IMR-90 (cell line): ENCODE measurements at regions of chr16 and their contacts with region 1.

Region 1: DNA sequence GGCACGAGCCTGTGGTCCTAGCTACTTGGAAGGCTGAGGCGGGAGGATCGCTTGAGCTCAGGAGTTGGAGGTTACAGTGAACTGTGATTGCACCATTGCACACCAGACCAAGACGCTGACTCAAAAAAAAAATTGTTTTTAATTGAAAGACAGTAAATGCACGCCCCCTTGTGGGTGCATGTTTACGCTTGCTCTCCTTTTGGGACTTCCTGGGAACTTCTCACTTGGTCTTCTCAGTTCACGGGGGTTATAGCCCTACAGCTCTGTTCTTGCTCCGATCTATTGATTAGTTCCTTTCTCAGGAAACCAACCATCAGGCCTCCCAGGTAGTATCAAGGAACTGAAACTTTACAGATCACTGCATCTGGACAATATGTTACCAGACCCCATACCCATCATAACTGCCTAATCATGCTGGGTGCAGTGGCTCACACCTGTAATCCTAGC is 14.2 kb upstream of the RIPOR1 start:
- DNase-seq: peak; percentile 84
- ATAC-seq: peak; percentile 81
- H3K4me3 ChIP-seq: no peak overlapping the region
- H3K27ac ChIP-seq: no peak overlapping the region
- H3K4me1 ChIP-seq: peaks cover 6% of the 10 kb centered on the region
- H3K27me3 ChIP-seq: no peaks in the 10 kb centered on the region; the same call in 1 of the 2 replicates
- CTCF ChIP-seq: peak; percentile 80
- POLR2A ChIP-seq: no peak
- RAD21 ChIP-seq: peak; percentile 67

Region 2: GRCh38 chr16:67349172-67349571 is 165.2 kb before region 1 on chr16:
- CTCF ChIA-PET with region 1: no interaction called
- POLR2A ChIA-PET with region 1: no interaction called
- dilution Hi-C with region 1: no loop called
- in situ Hi-C with region 1: no loop called
- intact Hi-C with region 1: no loop called
- DNase-seq: peak; percentile 44
- ATAC-seq: peak; percentile 46; the same call in 1 of the 2 replicates
- H3K4me3 ChIP-seq: no peak overlapping the region
- H3K27ac ChIP-seq: no peak overlapping the region
- H3K4me1 ChIP-seq: no peaks in the 10 kb centered on the region
- H3K27me3 ChIP-seq: peaks cover 4% of the 10 kb centered on the region
- CTCF ChIP-seq: peak; percentile 61
- POLR2A ChIP-seq: no peak
- RAD21 ChIP-seq: peak; percentile 38

Region 3: GRCh38 chr16:67480833-67481560 is 33.4 kb before region 1 on chr16 and contains the start of gene ATP6V0D1:
- CTCF ChIA-PET with region 1: interaction called, 8 read pairs
- POLR2A ChIA-PET with region 1: no interaction called
- dilution Hi-C with region 1: no loop called
- in situ Hi-C with region 1: no loop called
- intact Hi-C with region 1: loop called (anchors 1 kb)
- DNase-seq: peak; percentile 97
- ATAC-seq: peak; percentile 96
- H3K4me3 ChIP-seq: peak within 1 kb of the TSS; percentile 81
- H3K27ac ChIP-seq: peak within 1 kb of the TSS; percentile 82
- H3K4me1 ChIP-seq: peaks cover 14% of the 10 kb centered on the region
- H3K27me3 ChIP-seq: no peaks in the 10 kb centered on the region
- CTCF ChIP-seq: peak; percentile 98
- POLR2A ChIP-seq: peak; percentile 93
- RAD21 ChIP-seq: peak; percentile 69
- total RNA-seq, gene ATP6V0D1: 112 and 128 TPM in 2 replicates

Region 4: GRCh38 chr16:67490335-67491096 is 23.9 kb before region 1 on chr16:
- CTCF ChIA-PET with region 1: interaction called, 16 read pairs
- POLR2A ChIA-PET with region 1: interaction called, 10 read pairs
- dilution Hi-C with region 1: no loop called
- in situ Hi-C with region 1: no loop called
- intact Hi-C with region 1: loop called (anchors 1 kb)
- DNase-seq: peak; percentile 72
- ATAC-seq: peak; percentile 66
- H3K4me3 ChIP-seq: no peak overlapping the region
- H3K27ac ChIP-seq: no peak overlapping the region
- H3K4me1 ChIP-seq: peaks cover 5% of the 10 kb centered on the region
- H3K27me3 ChIP-seq: no peaks in the 10 kb centered on the region
- CTCF ChIP-seq: no peak
- POLR2A ChIP-seq: no peak
- RAD21 ChIP-seq: no peak

Region 5: GRCh38 chr16:67499106-67499505 is 15.3 kb before region 1 on chr16:
- CTCF ChIA-PET with region 1: interaction called, 16 read pairs
- POLR2A ChIA-PET with region 1: no interaction called
- dilution Hi-C with region 1: no loop called
- in situ Hi-C with region 1: no loop called
- intact Hi-C with region 1: loop called (anchors 1 kb)
- DNase-seq: peak; percentile 19
- ATAC-seq: no peak
- H3K4me3 ChIP-seq: no peak overlapping the region
- H3K27ac ChIP-seq: no peak overlapping the region
- H3K4me1 ChIP-seq: no peaks in the 10 kb centered on the region
- H3K27me3 ChIP-seq: no peaks in the 10 kb centered on the region
- CTCF ChIP-seq: no peak
- POLR2A ChIP-seq: no peak
- RAD21 ChIP-seq: no peak